ENCODE measurements at regions of chr15 and their contacts with region 1.

Region 1: DNA sequence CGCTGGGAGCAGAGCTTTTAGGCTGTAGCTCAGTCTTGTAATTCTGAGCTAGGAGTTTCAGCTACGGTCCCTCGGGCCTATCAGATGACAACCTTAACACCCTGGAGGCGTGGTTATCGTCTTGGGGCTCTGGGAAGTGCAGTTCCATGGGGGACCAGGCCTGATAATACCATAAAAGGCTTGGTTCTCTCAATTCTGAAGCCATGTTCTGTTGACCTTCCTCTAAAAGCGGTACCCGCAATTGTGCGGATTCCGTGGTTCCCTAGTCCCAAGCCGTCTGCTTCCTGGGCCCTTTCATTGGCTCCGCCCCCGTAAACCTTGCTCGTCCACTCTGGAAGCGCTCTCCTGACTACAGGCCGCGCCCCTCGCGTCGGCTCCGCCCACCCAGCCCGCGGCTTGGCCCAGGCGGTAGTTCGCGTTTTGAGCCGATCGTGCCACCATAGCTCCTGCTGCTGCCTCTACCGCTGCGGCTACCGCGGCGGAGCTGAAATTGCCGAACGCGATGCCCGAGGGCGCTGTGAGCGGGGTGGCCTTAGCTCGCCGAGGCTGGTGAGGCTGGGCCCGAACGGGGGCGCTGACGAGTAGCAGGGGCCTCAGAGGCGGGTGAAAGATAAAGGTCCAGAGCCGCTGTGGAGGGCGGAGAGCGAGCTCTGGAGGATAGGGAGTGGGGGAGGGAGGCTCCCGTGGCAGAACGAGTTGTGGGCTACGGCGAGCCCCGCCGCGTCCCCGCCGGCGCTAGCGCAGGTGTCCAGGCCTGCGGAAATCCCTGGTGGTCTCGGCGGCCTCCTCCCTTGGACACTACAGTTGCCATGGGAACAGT is at the start of gene MAPKBP1:
- DNase-seq: peak; percentile 99
- H3K4me3 Mint-ChIP-seq: peak within 1 kb of the TSS; percentile 94
- H3K27ac Mint-ChIP-seq: peak within 1 kb of the TSS; percentile 95
- H3K4me1 Mint-ChIP-seq: peaks cover 59% of the 10 kb centered on the region
- H3K27me3 Mint-ChIP-seq: no peaks in the 10 kb centered on the region
- total RNA-seq, gene MAPKBP1: 28.9 to 31.6 TPM

Region 2: DNA sequence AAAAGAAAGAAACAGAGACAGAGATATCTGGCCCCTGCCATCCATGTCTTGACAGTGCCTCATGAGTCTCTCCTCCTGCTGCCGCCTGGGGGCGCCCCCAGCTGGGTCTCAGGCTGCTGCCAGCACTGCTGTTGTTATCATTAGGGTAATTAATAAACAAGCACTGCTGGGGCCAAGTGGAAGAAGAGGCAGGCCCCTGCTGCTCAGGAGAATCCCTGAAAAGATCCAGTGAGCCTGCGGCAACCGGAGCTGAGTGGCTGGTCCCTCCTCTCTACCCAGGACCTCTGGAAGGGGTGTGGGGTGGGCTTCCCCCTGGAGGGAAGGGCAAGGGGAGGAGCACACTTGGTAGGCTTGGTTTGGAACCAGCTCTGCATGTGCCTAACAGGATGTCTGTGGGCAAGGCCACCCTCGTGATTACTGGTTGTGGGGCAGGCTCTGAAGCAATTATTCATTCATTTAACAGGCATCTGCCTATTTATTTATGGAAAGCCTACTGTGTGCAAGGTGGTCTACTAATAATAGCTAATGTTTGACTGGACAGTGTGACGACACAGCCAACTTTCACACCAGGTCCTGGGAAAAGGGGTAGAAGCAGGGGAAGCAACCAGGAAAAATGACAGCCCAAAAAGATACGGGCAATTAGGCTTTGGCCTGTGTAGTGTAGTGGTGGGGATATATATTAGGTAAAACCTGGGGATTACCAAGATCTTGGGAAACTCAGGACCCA is 216.4 kb before region 1 on chr15:
- CTCF ChIA-PET with region 1: interaction called, 16 read pairs
- POLR2A ChIA-PET with region 1: no interaction called
- DNase-seq: peak; percentile 77
- H3K4me3 Mint-ChIP-seq: peak overlapping the region; percentile 74
- H3K27ac Mint-ChIP-seq: peak overlapping the region; percentile 68
- H3K4me1 Mint-ChIP-seq: peaks cover 27% of the 10 kb centered on the region
- H3K27me3 Mint-ChIP-seq: peaks cover 38% of the 10 kb centered on the region

Region 3: GRCh38 chr15:41756198-41756597 is 18.1 kb before region 1 on chr15:
- CTCF ChIA-PET with region 1: interaction called, 16 read pairs
- POLR2A ChIA-PET with region 1: no interaction called
- DNase-seq: no peak
- H3K4me3 Mint-ChIP-seq: no peak overlapping the region
- H3K27ac Mint-ChIP-seq: no peak overlapping the region
- H3K4me1 Mint-ChIP-seq: no peaks in the 10 kb centered on the region
- H3K27me3 Mint-ChIP-seq: no peaks in the 10 kb centered on the region

Region 4: GRCh38 chr15:41811432-41812195 is 37.3 kb after region 1 on chr15:
- CTCF ChIA-PET with region 1: interaction called, 270 read pairs
- POLR2A ChIA-PET with region 1: interaction called, 59 read pairs
- DNase-seq: peak; percentile 78
- H3K4me3 Mint-ChIP-seq: no peak overlapping the region
- H3K27ac Mint-ChIP-seq: peak overlapping the region; percentile 47
- H3K4me1 Mint-ChIP-seq: peaks cover 42% of the 10 kb centered on the region
- H3K27me3 Mint-ChIP-seq: no peaks in the 10 kb centered on the region

Region 5: GRCh38 chr15:41894791-41895463 is 120.7 kb after region 1 on chr15:
- CTCF ChIA-PET with region 1: interaction called, 213 read pairs
- POLR2A ChIA-PET with region 1: interaction called, 11 read pairs
- DNase-seq: peak; percentile 92
- H3K4me3 Mint-ChIP-seq: peak overlapping the region; percentile 54
- H3K27ac Mint-ChIP-seq: peak overlapping the region; percentile 94
- H3K4me1 Mint-ChIP-seq: peaks cover 48% of the 10 kb centered on the region
- H3K27me3 Mint-ChIP-seq: no peaks in the 10 kb centered on the region

Region 6: GRCh38 chr15:41972253-41973242 is 198.3 kb after region 1 on chr15 and contains the start of gene EHD4:
- CTCF ChIA-PET with region 1: interaction called, 21 read pairs
- POLR2A ChIA-PET with region 1: interaction called, 11 read pairs
- DNase-seq: peak; percentile 96
- H3K4me3 Mint-ChIP-seq: peak within 1 kb of the TSS; percentile 82
- H3K27ac Mint-ChIP-seq: peak within 1 kb of the TSS; percentile 90
- H3K4me1 Mint-ChIP-seq: peaks cover 55% of the 10 kb centered on the region
- H3K27me3 Mint-ChIP-seq: peaks cover 18% of the 10 kb centered on the region
- total RNA-seq, gene EHD4: 25.0 to 25.3 TPM